ENCODE measurements at regions of chr20 and their contacts with region 1.

Region 1: GRCh38 chr20:10034717-10035571 is at the start of gene ANKEF1:
- DNase-seq: peak; percentile 88 to 91
- ATAC-seq: peak; percentile 99 to 100
- H3K4me3 ChIP-seq: peak within 1 kb of the TSS; percentile 61
- H3K27ac ChIP-seq: peak within 1 kb of the TSS; percentile 85 to 93
- H3K4me1 ChIP-seq: peaks cover 23% of the 10 kb centered on the region
- CTCF ChIP-seq: no peak
- EP300 ChIP-seq: no peak
- POLR2A ChIP-seq: peak; percentile 69
- RAD21 ChIP-seq: peak in 1 of 2 experiments; percentile 38; a peak in 2 of 5 replicates
- polyA plus RNA-seq, gene ANKEF1: 19.7 and 21.2 TPM in 2 replicates

Region 2: DNA sequence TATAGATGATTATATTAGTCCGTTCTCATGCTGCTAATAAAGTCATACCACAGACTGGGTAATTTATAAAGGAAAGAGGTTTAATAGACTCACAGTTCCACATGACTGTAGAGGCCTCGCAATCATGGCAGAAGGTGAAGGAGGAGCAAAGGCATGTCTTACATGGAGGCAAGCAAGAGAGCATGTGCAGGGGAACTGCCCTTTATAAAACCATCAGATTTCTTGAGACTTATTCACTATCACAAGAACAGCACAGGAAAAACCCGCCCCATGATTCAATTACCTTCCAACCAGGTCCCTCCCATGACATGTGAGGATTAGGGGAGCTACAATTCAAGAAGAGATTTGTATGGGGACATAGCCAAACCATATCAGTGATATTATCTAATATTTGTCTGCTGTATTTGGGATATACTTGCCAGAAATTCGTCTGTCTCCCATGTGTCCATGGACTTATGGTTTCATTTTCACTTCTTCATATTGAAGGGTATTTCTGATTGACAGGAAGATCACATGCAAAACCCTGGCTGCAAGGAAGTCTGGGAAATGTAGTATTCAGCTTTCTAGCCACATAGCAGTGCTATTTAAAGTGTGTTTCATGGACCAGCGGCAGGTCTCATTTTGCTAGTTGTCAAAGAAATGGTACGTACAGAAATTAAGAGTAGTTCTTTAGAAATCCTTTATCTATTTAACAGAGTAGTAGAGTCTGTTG is 145.5 kb before region 1 on chr20:
- CTCF ChIA-PET with region 1: no interaction called
- POLR2A ChIA-PET with region 1: no interaction called
- DNase-seq: peak in 1 of 2 experiments; percentile 16
- ATAC-seq: peak in 1 of 2 experiments; percentile 53; a peak in 2 of 6 replicates
- H3K4me3 ChIP-seq: no peak overlapping the region
- H3K27ac ChIP-seq: no peak overlapping the region
- H3K4me1 ChIP-seq: no peaks in the 10 kb centered on the region
- CTCF ChIP-seq: no peak
- EP300 ChIP-seq: no peak
- POLR2A ChIP-seq: no peak
- RAD21 ChIP-seq: no peak

Region 3: GRCh38 chr20:10061641-10062040 is 26.7 kb after region 1 on chr20:
- CTCF ChIA-PET with region 1: no interaction called
- POLR2A ChIA-PET with region 1: no interaction called
- DNase-seq: no peak
- ATAC-seq: no peak
- H3K4me3 ChIP-seq: no peak overlapping the region
- H3K27ac ChIP-seq: no peak overlapping the region
- H3K4me1 ChIP-seq: no peaks in the 10 kb centered on the region
- CTCF ChIP-seq: no peak
- EP300 ChIP-seq: no peak
- POLR2A ChIP-seq: no peak
- RAD21 ChIP-seq: no peak

Region 4: GRCh38 chr20:10074513-10074912 is 39.6 kb after region 1 on chr20:
- CTCF ChIA-PET with region 1: interaction called, 22 read pairs
- POLR2A ChIA-PET with region 1: no interaction called
- DNase-seq: peak; percentile 75 to 81
- ATAC-seq: peak; percentile 87 to 92
- H3K4me3 ChIP-seq: no peak overlapping the region
- H3K27ac ChIP-seq: peak overlapping the region; percentile 67 to 82
- H3K4me1 ChIP-seq: peaks cover 46% of the 10 kb centered on the region
- CTCF ChIP-seq: no peak
- EP300 ChIP-seq: peak in 1 of 2 experiments; percentile 49; a peak in 1 of 5 replicates
- POLR2A ChIP-seq: no peak
- RAD21 ChIP-seq: 0 out of 5 replicates have a peak, but pooled peaks of 1 of the 2 experiments have one; percentile 1